A549 (cell line): ENCODE measurements at regions of chr2 and their contacts with region 1.

Region 1: GRCh38 chr2:95389245-95390119 is 13.0 kb upstream of the FAHD2A start:
- DNase-seq: peak; percentile 61 to 64
- ATAC-seq: peak; percentile 84 to 96
- H3K4me3 ChIP-seq: no peak overlapping the region
- H3K27ac ChIP-seq: no peak overlapping the region
- H3K4me1 ChIP-seq: no peaks in the 10 kb centered on the region
- CTCF ChIP-seq: peak; percentile 72
- EP300 ChIP-seq: no peak
- POLR2A ChIP-seq: no peak
- RAD21 ChIP-seq: peak; percentile 58 to 66

Region 2: GRCh38 chr2:95345566-95346230 is 43.8 kb before region 1 on chr2:
- CTCF ChIA-PET with region 1: interaction called, 19 read pairs
- POLR2A ChIA-PET with region 1: interaction called, 3 read pairs
- DNase-seq: peak; percentile 80 to 88
- ATAC-seq: peak; percentile 82 to 97
- H3K4me3 ChIP-seq: peak overlapping the region; percentile 62
- H3K27ac ChIP-seq: peak overlapping the region; percentile 67 to 84
- H3K4me1 ChIP-seq: 0 out of 3 replicates have a peak, but pooled peaks cover 4% of the 10 kb centered on the region
- CTCF ChIP-seq: peak; percentile 92
- EP300 ChIP-seq: no peak
- POLR2A ChIP-seq: peak; percentile 21; the same call in 1 of the 2 replicates
- RAD21 ChIP-seq: peak; percentile 66 to 89

Region 3: DNA sequence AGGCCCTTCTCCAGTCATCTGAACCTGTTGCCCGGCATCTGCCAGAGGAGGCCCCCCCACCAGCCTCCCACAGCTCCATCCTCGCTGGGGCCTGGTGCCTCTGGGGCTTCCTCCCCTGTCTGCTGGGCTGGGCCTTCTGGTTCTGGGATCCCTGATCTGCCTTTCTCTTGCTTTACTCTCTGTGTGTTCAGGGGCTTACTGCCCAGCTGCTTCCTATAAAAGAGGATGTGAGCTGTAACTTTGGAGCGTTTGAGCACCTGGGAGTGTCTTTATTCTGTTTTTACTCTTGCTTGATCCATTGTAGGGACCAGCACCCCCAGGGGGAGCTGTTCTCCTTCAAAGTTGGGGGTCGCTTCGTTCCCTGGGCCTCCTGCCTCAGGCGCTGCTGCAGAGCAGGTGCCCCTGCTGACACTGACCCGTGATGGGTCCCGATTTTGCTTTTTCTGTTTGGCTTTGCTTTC is 10.1 kb before region 1 on chr2:
- CTCF ChIA-PET with region 1: interaction called, 27 read pairs
- POLR2A ChIA-PET with region 1: no interaction called
- DNase-seq: peak in 1 of 2 experiments; percentile 19
- ATAC-seq: peak in 1 of 2 experiments; percentile 14; a peak in 1 of 6 replicates
- H3K4me3 ChIP-seq: no peak overlapping the region
- H3K27ac ChIP-seq: no peak overlapping the region
- H3K4me1 ChIP-seq: no peaks in the 10 kb centered on the region
- CTCF ChIP-seq: no peak; the same call in 2 of the 3 replicates
- EP300 ChIP-seq: no peak
- POLR2A ChIP-seq: no peak
- RAD21 ChIP-seq: no peak

Region 4: DNA sequence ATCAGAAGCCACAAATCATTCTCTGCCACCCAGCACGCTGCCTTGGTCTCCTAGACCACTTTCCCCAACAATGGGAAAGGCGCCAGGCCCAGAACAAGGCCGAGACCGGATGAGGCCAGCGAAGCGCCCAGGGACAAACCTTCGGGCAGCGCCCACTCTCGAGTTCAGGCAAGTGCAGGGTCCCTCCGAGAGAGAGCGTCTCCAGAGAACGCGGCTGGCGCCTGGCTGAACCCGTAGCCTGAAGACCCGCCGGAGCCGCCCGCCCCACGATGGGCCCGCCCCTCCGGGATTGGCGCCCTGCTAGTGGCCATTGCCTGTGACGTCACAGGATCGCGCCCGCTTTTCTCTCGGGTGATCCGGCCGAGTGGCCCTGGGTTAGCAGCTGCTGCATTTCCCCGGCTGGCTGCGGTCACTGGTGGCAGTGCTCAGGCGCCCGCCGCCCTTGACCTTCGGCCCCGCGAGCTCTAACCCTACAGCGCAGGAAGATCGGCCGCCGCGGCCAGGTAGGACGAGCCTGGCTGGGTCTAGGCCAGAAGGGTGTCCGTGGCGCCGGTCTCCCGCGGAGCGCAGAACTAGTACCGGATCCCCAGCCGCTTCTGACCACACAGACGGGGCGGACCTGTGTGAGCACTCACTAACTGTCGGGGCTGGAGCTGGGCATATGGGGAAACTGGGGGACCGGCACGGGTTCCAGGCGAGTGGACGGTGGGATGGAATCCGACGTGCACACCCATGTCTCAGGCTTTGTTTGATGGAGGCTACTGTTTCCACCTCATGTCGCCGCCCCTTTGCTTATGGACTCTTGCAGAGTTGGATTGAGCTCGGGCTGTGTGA is 13.1 kb after region 1 on chr2 and contains the start of gene FAHD2A:
- CTCF ChIA-PET with region 1: interaction called, 42 read pairs
- POLR2A ChIA-PET with region 1: interaction called, 6 read pairs
- DNase-seq: peak; percentile 88 to 99
- ATAC-seq: peak; percentile 91 to 97
- H3K4me3 ChIP-seq: peak within 1 kb of the TSS; percentile 89
- H3K27ac ChIP-seq: peak within 1 kb of the TSS; percentile 77 to 92
- H3K4me1 ChIP-seq: peaks cover 8% of the 10 kb centered on the region; the same call in 1 of the 3 replicates
- CTCF ChIP-seq: no peak
- EP300 ChIP-seq: no peak
- POLR2A ChIP-seq: peak; percentile 80
- RAD21 ChIP-seq: no peak
- polyA plus RNA-seq, gene FAHD2A: 33.0 and 35.2 TPM in 2 replicates

Region 5: GRCh38 chr2:95728878-95729596 is 339.6 kb after region 1 on chr2:
- CTCF ChIA-PET with region 1: interaction called, 16 read pairs
- POLR2A ChIA-PET with region 1: no interaction called
- DNase-seq: peak; percentile 8 to 89
- ATAC-seq: peak; percentile 96 to 99
- H3K4me3 ChIP-seq: no peak overlapping the region
- H3K27ac ChIP-seq: no peak overlapping the region
- H3K4me1 ChIP-seq: no peaks in the 10 kb centered on the region
- CTCF ChIP-seq: peak; percentile 70
- EP300 ChIP-seq: no peak
- POLR2A ChIP-seq: no peak
- RAD21 ChIP-seq: peak; percentile 87 to 89

Region 6: GRCh38 chr2:95734976-95735890 is 345.8 kb after region 1 on chr2:
- CTCF ChIA-PET with region 1: interaction called, 10 read pairs
- POLR2A ChIA-PET with region 1: no interaction called
- DNase-seq: no peak
- ATAC-seq: no peak
- H3K4me3 ChIP-seq: no peak overlapping the region
- H3K27ac ChIP-seq: no peak overlapping the region
- H3K4me1 ChIP-seq: no peaks in the 10 kb centered on the region
- CTCF ChIP-seq: no peak
- EP300 ChIP-seq: no peak
- POLR2A ChIP-seq: no peak
- RAD21 ChIP-seq: no peak